Motor neuron (in vitro differentiated cells): ENCODE measurements at regions of chr4 and their contacts with region 1.

Region 1: GRCh38 chr4:121192480-121192879 is 28.4 kb upstream of the TNIP3 start:
- ATAC-seq: peak in 4 of 8 experiments; percentile 11 to 25 (median 18)
- H3K4me3 ChIP-seq: no peak overlapping the region
- H3K27ac ChIP-seq: no peak overlapping the region
- H3K4me1 ChIP-seq: no peaks in the 10 kb centered on the region

Region 2: GRCh38 chr4:121299367-121299766 is 106.9 kb after region 1 on chr4:
- in situ Hi-C with region 1: loop called in 1 of 9 experiments (anchors 10 kb)
- ATAC-seq: peak in 5 of 8 experiments; percentile 66 to 86 (median 73)
- H3K4me3 ChIP-seq: no peak overlapping the region
- H3K27ac ChIP-seq: no peak overlapping the region
- H3K4me1 ChIP-seq: peaks cover 0 to 8% of the 10 kb centered on the region in 2 donors

Region 3: GRCh38 chr4:121574618-121575017 is 382.1 kb after region 1 on chr4:
- in situ Hi-C with region 1: no loop called
- ATAC-seq: no peak
- H3K4me3 ChIP-seq: no peak overlapping the region
- H3K27ac ChIP-seq: no peak overlapping the region
- H3K4me1 ChIP-seq: no peaks in the 10 kb centered on the region